ENCODE measurements at regions of chr12 and their contacts with region 1.

Region 1: DNA sequence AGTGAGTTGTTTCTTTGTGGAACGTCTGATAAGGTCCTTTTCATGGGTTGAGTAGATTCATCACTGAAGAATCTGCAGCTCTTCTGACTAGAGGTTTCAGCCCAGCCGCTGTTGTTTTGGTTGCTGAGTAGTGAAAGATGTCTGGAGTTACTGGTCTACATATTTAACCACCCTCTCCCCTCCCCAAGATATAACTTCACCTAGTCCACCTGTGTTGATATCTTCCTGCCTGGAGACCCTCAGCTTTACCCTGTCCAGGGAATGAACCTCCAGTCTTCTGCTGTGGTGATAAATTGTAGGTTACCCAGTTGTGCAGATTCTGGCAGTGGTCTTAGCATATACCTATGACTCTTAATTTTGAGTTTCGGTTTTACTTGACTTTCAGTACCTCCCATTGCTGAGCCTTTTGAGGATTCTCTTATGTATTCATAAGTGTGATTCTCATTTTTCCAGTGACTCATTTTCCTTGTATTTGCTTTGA is 62.9 kb downstream of the CCDC91 start:
- DNase-seq: peak; percentile 9 to 46 (median 42)
- H3K4me3 ChIP-seq: peak overlapping the region; percentile 22 to 31
- H3K4me3 Mint-ChIP-seq: peak overlapping the region; percentile 79 to 92 (median 86)
- H3K27ac ChIP-seq: peak overlapping the region; percentile 44
- H3K27ac Mint-ChIP-seq: peak overlapping the region; percentile 77 to 93 (median 90)
- H3K4me1 ChIP-seq: peaks cover 59% of the 10 kb centered on the region
- H3K4me1 Mint-ChIP-seq: peaks cover 50 to 58% (median 55%) of the 10 kb centered on the region in 4 donors
- H3K27me3 ChIP-seq: no peaks in the 10 kb centered on the region
- H3K27me3 Mint-ChIP-seq: no peaks in the 10 kb centered on the region

Region 2: GRCh38 chr12:28223025-28223554 is 30.1 kb before region 1 on chr12:
- CTCF ChIA-PET with region 1: no interaction called
- POLR2A ChIA-PET with region 1: interaction called, 3 read pairs
- intact Hi-C with region 1: loop called (anchors 2 kb)
- DNase-seq: peak in 4 of 5 donors; percentile 19 to 31 (median 24)
- H3K4me3 ChIP-seq: no peak overlapping the region
- H3K4me3 Mint-ChIP-seq: peak overlapping the region; percentile 26 to 86 (median 78)
- H3K27ac ChIP-seq: no peak overlapping the region
- H3K27ac Mint-ChIP-seq: peak overlapping the region; percentile 54 to 77 (median 63)
- H3K4me1 ChIP-seq: peaks cover 38% of the 10 kb centered on the region
- H3K4me1 Mint-ChIP-seq: peaks cover 37 to 63% (median 53%) of the 10 kb centered on the region in 4 donors
- H3K27me3 ChIP-seq: no peaks in the 10 kb centered on the region
- H3K27me3 Mint-ChIP-seq: no peaks in the 10 kb centered on the region

Region 3: DNA sequence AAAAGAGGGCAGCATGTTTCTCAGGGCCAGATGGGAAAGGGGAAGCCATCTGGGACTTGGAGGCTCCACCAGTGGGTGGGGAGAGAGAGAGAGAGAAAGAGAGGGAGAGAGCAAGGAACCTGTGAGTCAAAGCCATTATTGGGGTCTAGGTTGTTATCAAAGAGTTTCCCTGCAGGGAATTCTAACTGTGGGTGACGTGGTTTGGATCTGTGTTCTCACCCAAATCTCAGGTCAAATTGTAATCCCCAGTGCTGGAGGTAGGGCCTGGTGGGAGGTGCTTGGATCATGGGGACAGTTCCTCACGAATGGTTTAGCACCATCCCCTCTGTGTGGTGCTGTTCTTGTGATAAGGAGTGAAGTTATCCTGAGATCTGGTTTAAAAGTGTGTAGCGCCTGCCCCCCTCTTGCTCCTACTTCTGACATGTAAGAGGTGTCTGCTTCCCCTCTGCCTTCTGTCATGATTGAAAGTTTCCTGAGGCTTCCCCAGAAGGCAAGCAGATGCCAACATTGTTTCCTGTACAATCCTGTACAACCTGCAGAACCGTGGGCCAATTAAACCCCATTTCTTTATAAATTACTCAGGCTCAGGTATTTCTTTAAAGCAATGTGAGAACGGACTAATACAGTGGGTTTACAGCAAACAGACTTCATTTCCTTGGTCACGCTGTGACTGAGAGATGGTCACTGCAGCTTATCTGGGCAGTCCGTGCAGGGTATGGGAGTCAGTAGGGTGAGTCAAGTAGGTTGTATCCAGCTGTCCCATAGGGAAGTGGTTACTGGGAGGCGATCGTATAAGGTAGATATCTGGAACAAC is 10.5 kb before region 1 on chr12:
- CTCF ChIA-PET with region 1: interaction called, 5 read pairs
- POLR2A ChIA-PET with region 1: interaction called, 4 read pairs
- intact Hi-C with region 1: loop called (anchors 2 kb)
- DNase-seq: no peak
- H3K4me3 ChIP-seq: no peak overlapping the region
- H3K4me3 Mint-ChIP-seq: no peak overlapping the region
- H3K27ac ChIP-seq: no peak overlapping the region
- H3K27ac Mint-ChIP-seq: no peak overlapping the region
- H3K4me1 ChIP-seq: peaks cover 4% of the 10 kb centered on the region
- H3K4me1 Mint-ChIP-seq: peaks cover 15 to 25% (median 19%) of the 10 kb centered on the region in 4 donors
- H3K27me3 ChIP-seq: no peaks in the 10 kb centered on the region
- H3K27me3 Mint-ChIP-seq: no peaks in the 10 kb centered on the region

Region 4: DNA sequence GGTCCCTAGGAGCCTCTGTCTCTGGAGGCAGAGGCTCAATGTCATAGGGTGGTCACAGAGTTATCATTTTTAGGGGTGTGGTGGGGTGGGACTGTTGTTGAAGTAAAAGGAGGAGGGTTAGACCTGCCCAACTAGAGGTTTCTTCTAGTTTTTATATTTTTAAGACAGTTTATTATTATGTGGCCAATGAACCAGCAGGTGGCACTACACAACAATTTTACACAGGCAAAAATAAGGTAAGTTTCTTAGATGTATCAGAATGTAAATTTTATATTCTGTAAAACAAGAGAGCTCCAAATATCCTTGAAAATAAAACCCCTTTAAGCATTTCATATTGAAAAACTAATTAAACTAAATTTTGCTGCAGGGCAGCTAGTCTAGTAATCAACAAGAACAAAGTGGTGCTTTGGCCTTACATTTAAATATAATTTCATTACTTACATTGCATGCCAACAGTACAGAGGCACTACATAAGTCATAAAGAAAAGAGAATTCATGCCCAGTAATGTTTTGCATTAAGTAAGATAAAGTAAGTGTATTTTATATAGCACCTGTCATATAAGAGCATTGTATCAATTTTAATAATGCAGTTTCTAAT is 1266.5 kb after region 1 on chr12:
- CTCF ChIA-PET with region 1: no interaction called
- POLR2A ChIA-PET with region 1: no interaction called
- intact Hi-C with region 1: no loop called
- DNase-seq: peak in 4 of 5 donors; percentile 11 to 30 (median 18)
- H3K4me3 ChIP-seq: no peak overlapping the region
- H3K4me3 Mint-ChIP-seq: no peak overlapping the region
- H3K27ac ChIP-seq: no peak overlapping the region
- H3K27ac Mint-ChIP-seq: no peak overlapping the region
- H3K4me1 ChIP-seq: no peaks in the 10 kb centered on the region
- H3K4me1 Mint-ChIP-seq: no peaks in the 10 kb centered on the region
- H3K27me3 ChIP-seq: no peaks in the 10 kb centered on the region
- H3K27me3 Mint-ChIP-seq: peaks cover 4 to 8% of the 10 kb centered on the region in 2 donors